ENCODE measurements at regions of chr2 and their contacts with region 1.

Region 1: DNA sequence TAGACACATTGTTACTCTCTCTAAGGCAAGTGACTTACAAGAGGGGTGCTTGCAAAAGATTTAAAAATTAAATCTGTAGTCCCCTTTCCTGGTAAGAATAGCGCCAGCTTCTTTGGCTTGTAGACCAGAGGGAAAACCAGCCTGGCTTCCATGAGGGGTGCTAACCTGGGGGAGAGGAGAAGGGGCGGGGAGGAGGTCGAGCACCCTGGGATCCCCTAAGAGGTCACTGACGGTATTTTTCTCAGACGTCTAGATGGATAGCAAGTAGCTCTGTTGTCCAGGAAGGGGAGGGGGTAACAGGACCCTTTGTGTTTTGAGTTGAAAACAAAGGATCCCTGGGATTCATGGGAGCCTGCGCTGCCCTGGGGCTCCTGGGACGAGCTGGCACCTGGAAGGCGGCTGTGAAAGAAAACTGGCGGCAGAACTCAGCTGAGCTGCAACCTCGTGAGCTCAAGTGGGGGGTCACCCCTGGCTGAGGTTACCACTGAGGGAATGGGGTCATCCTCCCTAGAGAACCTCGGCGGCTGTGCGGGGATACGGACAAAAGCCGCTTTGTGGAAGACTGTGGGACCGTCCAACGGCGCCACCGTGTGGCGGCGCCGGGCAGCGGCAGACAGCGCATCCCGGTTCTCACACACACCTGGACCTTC is 37.8 kb upstream of the MRPL19 start:
- DNase-seq: peak; percentile 65
- ATAC-seq: peak; percentile 91
- H3K4me3 Mint-ChIP-seq: no peak overlapping the region
- H3K27ac Mint-ChIP-seq: no peak overlapping the region
- H3K4me1 Mint-ChIP-seq: peaks cover 3% of the 10 kb centered on the region
- H3K27me3 Mint-ChIP-seq: peaks cover 57% of the 10 kb centered on the region
- CTCF ChIP-seq: peak; percentile 94

Region 2: DNA sequence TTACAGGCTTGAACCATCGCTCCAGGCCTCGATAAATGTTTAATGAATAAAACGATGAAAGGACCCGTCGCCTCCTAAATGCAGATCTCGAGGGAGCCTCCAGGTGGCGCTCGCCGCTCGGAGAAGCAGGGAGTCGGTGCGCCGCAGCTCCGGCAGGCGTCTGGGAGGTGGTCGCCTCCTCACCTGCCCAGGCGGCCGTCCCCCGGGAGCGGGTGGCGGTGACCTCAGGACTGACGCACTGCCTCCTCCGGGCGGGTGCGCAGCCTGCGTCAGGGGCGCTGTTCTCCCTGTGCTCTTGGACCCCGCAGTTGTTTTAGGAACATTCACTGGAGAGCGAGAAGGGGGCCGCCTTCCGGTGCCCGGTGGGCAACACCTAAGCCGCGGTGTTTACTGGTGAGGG is 689.0 kb before region 1 on chr2:
- CTCF ChIA-PET with region 1: interaction called, 12 read pairs
- POLR2A ChIA-PET with region 1: no interaction called
- intact Hi-C with region 1: loop called (anchors 10 kb)
- DNase-seq: peak; percentile 78
- ATAC-seq: peak; percentile 75
- H3K4me3 Mint-ChIP-seq: peak overlapping the region; percentile 37
- H3K27ac Mint-ChIP-seq: no peak overlapping the region
- H3K4me1 Mint-ChIP-seq: peaks cover 10% of the 10 kb centered on the region
- H3K27me3 Mint-ChIP-seq: peaks cover 20% of the 10 kb centered on the region
- CTCF ChIP-seq: peak; percentile 98

Region 3: GRCh38 chr2:75491129-75491753 is 117.6 kb before region 1 on chr2:
- CTCF ChIA-PET with region 1: interaction called, 10 read pairs
- POLR2A ChIA-PET with region 1: no interaction called
- intact Hi-C with region 1: no loop called
- DNase-seq: no peak
- ATAC-seq: no peak
- H3K4me3 Mint-ChIP-seq: no peak overlapping the region
- H3K27ac Mint-ChIP-seq: no peak overlapping the region
- H3K4me1 Mint-ChIP-seq: no peaks in the 10 kb centered on the region
- H3K27me3 Mint-ChIP-seq: peaks cover 5% of the 10 kb centered on the region
- CTCF ChIP-seq: no peak

Region 4: DNA sequence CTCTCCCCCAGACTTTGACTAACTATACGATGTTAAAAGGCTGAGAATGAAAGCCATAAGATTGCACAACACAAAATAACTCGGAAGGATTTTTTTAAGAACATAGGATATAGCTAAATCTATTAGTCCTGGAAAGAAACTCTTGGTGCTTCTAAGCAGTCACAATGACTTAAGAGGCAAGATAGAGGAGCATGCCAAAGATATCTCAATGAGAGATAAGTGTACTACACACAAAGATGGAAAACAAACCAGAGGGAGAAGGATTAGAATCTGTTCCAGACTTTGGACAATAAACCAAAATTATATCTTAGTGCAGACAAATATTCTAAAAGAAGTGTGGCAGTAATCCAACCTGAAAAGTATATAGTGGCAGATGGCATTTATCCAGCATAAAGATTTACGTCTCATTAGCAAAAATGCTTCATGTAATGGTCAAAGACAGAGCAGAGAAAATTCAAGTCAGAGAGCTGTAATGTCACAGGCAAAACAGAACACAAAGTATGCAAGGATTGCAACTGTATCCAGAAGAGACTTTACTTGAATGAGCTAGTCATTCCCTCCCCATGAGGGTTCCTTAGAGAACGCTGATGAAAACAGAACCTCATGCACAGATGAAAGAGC is 19.3 kb before region 1 on chr2:
- CTCF ChIA-PET with region 1: interaction called, 10 read pairs
- POLR2A ChIA-PET with region 1: no interaction called
- intact Hi-C with region 1: no loop called
- DNase-seq: no peak
- ATAC-seq: no peak
- H3K4me3 Mint-ChIP-seq: no peak overlapping the region
- H3K27ac Mint-ChIP-seq: no peak overlapping the region
- H3K4me1 Mint-ChIP-seq: no peaks in the 10 kb centered on the region
- H3K27me3 Mint-ChIP-seq: peaks cover 6% of the 10 kb centered on the region
- CTCF ChIP-seq: no peak

Region 5: DNA sequence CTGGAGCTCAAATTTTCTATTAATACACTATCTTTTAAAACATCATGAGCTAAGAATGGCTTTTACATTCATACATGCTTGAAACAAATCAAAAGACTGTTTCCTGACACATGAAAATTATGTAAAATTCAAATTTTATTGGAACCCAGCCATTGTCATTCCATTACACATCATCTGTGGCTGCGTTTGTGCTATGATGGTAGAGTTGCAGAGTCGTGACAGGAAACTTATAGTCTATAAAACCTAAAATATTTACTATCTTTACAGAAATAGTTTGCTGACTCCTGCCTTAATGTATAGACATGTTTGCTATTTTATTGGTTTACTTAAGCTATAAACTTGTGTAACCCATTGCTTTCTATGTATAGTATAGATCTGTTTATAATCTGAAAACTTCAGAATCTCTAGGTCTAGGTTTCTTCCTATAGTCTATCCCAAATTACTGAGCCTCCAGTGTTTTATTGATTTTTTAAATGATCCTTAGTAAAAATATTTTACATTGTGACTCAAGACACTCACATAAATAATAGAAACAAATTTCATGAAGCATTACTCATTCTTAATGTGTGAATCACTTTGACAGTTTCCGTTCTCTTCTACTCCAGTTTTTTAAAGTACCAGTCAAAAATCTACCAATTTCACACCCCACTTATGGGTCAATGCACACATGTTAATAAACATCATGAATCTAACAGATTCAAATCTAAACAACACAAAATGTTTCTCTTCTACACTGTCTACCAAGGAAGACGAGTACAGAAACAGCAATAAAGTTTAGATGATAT is 11.3 kb after region 1 on chr2:
- CTCF ChIA-PET with region 1: interaction called, 11 read pairs
- POLR2A ChIA-PET with region 1: no interaction called
- intact Hi-C with region 1: no loop called
- DNase-seq: no peak
- ATAC-seq: no peak
- H3K4me3 Mint-ChIP-seq: no peak overlapping the region
- H3K27ac Mint-ChIP-seq: no peak overlapping the region
- H3K4me1 Mint-ChIP-seq: no peaks in the 10 kb centered on the region
- H3K27me3 Mint-ChIP-seq: peaks cover 12% of the 10 kb centered on the region
- CTCF ChIP-seq: no peak